ENCODE measurements at regions of chr1 and their contacts with region 1.

Region 1: DNA sequence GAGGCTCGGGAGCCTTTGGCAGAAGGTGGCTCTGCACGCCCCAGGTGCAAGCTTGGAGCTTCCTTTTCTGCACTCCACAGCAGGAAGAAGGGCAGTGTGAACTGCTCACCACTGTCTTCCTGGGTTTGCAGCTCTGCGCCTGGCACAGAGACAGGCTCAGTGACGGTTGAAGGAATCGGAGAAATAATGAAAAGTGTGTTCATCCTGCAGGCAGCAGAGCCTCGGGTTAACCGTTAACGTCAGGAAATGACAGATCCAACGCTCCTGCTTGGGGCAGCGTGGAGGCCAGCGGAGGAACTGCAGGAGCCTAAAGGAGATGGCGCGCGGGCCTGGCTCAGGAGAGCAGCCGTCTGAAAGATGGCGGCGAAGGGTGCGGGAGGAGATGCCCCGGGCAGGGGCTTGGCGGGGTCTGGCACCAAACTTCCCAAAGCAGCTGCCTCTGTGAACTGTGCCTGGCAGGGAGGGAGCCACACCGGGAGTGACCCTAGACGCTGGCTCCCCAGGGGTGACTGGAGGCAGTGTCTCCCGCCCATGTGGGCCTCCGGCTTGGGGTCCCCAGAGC is 10.9 kb upstream of the SAMD11 start:
- DNase-seq: peak; percentile 4 to 39 (median 18)
- ATAC-seq: peak in 1 of 4 donors; percentile 33
- H3K4me3 ChIP-seq: no peak overlapping the region
- H3K27ac ChIP-seq: no peak overlapping the region
- H3K4me1 ChIP-seq: peaks cover 0 to 16% (median 0%) of the 10 kb centered on the region in 12 donors
- H3K27me3 ChIP-seq: peaks cover 10 to 78% (median 23%) of the 10 kb centered on the region in 9 donors
- CTCF ChIP-seq: peak in 2 of 12 donors; percentile 15 to 25
- POLR2A ChIP-seq: no peak

Region 2: DNA sequence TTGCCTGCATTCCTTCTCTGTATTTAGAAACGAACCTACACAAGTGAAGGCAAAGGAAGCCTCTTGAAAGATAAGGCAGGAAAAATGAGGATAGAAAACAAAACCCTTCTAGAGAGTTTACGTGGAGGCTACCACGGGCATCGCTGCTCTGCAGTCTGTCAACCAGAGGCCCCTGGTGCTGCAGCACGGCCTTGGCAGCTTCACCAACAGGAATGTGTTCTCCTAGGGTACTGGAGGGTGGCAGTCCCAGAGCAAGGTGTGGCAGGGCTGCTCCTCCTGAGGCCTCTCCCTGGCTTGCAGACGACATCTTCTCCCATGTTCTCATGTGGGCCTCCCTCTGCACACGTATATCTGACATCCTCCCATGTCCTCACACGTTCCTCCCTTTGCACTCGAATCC is 46.7 kb before region 1 on chr1:
- intact Hi-C with region 1: no loop called
- DNase-seq: no peak
- ATAC-seq: peak; percentile 41 to 70 (median 55)
- H3K4me3 ChIP-seq: no peak overlapping the region
- H3K27ac ChIP-seq: peak overlapping the region in 8 of 12 donors; percentile 46 to 78 (median 66)
- H3K4me1 ChIP-seq: peaks cover 0 to 22% (median 7%) of the 10 kb centered on the region in 12 donors
- H3K27me3 ChIP-seq: peaks cover 0 to 19% (median 2%) of the 10 kb centered on the region in 9 donors
- CTCF ChIP-seq: no peak
- POLR2A ChIP-seq: no peak

Region 3: GRCh38 chr1:951364-951763 is 38.5 kb after region 1 on chr1:
- intact Hi-C with region 1: loop called in 3 of 10 experiments (anchors 5 to 10 kb)
- DNase-seq: no peak
- ATAC-seq: no peak
- H3K4me3 ChIP-seq: no peak overlapping the region
- H3K27ac ChIP-seq: no peak overlapping the region
- H3K4me1 ChIP-seq: no peaks in the 10 kb centered on the region
- H3K27me3 ChIP-seq: no peaks in the 10 kb centered on the region
- CTCF ChIP-seq: peak in 4 of 12 donors; percentile 12 to 22 (median 14)
- POLR2A ChIP-seq: no peak